Mammary epithelial cell (primary cell): ENCODE measurements at regions of chr4 and their contacts with region 1.

Region 1: GRCh38 chr4:1130316-1131186 is 17.2 kb upstream of the RNF212 start:
- DNase-seq: peak; percentile 60
- H3K4me3 ChIP-seq: no peak overlapping the region
- H3K27ac ChIP-seq: no peak overlapping the region
- H3K4me1 ChIP-seq: no peaks in the 10 kb centered on the region
- H3K27me3 ChIP-seq: no peaks in the 10 kb centered on the region
- CTCF ChIP-seq: peak; percentile 99 to 100

Region 2: GRCh38 chr4:1260418-1261106 is 130.0 kb after region 1 on chr4:
- CTCF ChIA-PET with region 1: no interaction called
- dilution Hi-C with region 1: no loop called
- in situ Hi-C with region 1: loop called in 1 of 2 experiments (anchors 10 kb)
- intact Hi-C with region 1: no loop called
- DNase-seq: no peak
- H3K4me3 ChIP-seq: no peak overlapping the region
- H3K27ac ChIP-seq: no peak overlapping the region
- H3K4me1 ChIP-seq: no peaks in the 10 kb centered on the region
- H3K27me3 ChIP-seq: no peaks in the 10 kb centered on the region
- CTCF ChIP-seq: no peak

Region 3: DNA sequence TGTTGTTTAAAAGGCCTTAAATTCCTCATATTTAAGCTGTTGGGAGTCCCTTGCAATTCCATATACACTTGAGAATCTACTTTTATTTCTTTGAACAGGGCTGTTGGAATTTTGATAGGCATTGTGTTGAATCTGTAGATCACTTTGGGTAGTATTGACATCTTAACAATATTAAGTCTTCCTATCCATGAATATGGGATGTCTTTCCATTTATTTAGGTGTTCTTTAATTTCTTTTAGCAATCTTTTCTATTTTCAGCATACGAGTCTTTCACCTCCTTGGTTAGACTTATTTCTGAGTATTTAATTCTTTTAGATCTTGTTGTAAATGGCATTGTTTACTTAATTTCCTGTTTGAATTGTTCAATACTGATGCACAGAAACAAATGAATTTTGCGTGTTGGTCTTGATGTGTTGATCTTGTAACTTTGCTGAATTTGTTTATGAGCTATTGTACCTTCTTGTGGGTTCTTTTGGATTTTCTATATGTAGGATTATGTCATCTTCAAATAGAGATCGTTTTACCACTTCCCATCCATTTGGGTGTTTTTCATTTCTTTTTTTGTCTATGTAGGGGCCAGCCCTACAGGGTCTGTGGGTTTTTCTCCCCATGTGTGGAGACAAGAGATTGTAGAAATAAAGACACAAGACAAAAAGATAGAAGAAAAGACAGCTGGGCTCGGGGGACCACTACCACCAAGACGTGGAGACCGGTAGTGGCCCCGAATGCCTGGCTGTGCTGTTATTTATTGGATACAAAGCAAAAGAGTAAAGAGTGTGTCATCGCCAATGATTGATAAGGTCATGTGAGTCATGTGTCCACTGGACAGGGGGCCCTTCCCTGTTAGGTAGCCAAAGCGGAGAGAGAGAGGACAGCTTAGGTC is 136.6 kb after region 1 on chr4:
- CTCF ChIA-PET with region 1: no interaction called
- dilution Hi-C with region 1: no loop called
- in situ Hi-C with region 1: loop called in 1 of 2 experiments (anchors 10 kb)
- intact Hi-C with region 1: loop called (anchors 1 kb)
- DNase-seq: no peak
- H3K4me3 ChIP-seq: no peak overlapping the region
- H3K27ac ChIP-seq: no peak overlapping the region
- H3K4me1 ChIP-seq: no peaks in the 10 kb centered on the region
- H3K27me3 ChIP-seq: no peaks in the 10 kb centered on the region
- CTCF ChIP-seq: no peak

Region 4: DNA sequence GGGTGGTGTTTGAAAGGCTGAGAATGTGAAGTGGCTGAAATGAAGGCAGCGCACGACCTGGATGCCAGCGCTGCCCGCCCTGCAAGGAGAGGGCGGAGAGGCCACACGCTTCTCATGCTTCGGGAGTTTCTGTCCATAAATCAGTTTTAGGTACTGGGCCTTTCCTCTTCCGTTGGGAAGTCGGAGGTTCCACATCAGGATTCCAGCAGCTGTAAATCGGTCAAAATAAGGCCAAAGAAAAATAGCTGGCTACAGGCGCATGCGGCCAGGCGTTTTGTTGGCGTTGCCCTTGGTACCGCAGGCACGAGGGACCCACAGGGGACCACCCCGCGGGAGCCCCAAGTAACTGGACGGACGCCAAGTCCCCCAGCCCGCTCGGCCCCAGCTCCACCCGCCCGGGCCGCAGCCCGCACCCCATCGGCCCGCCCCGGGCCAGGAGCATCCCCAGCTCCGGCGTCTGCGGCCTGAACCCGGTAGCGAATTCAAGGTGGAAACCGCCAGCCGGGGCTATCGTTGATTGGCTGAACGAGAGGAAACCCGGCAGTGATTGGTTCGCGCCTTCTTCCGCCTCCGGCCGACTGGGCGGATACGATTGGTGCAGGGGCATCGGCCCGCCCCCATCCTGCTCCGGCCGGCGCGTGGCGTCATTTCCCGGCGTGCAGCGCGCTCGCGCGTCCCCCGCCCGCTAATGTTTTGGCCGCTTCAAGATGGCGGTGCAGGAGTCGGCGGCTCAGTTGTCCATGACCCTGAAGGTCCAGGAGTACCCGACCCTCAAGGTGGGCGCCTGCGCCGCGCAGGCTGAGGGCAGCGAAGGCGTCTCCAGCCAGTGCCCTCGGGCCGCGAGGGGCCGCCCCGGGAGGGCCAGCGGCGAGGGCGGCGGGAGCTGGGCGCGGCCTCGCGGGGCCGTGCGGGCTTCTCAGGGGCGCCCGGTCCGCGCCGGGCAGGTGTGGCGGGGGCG is 158.9 kb after region 1 on chr4 and contains the start of gene MAEA:
- CTCF ChIA-PET with region 1: no interaction called
- dilution Hi-C with region 1: no loop called
- in situ Hi-C with region 1: no loop called
- intact Hi-C with region 1: loop called (anchors 1 kb)
- DNase-seq: peak; percentile 96
- H3K4me3 ChIP-seq: peak within 1 kb of the TSS; percentile 77 to 94 (median 79)
- H3K27ac ChIP-seq: peak within 1 kb of the TSS; percentile 80
- H3K4me1 ChIP-seq: peaks cover 26% of the 10 kb centered on the region
- H3K27me3 ChIP-seq: no peaks in the 10 kb centered on the region
- CTCF ChIP-seq: no peak
- total RNA-seq, gene MAEA: 80.4 to 109 TPM

Region 5: DNA sequence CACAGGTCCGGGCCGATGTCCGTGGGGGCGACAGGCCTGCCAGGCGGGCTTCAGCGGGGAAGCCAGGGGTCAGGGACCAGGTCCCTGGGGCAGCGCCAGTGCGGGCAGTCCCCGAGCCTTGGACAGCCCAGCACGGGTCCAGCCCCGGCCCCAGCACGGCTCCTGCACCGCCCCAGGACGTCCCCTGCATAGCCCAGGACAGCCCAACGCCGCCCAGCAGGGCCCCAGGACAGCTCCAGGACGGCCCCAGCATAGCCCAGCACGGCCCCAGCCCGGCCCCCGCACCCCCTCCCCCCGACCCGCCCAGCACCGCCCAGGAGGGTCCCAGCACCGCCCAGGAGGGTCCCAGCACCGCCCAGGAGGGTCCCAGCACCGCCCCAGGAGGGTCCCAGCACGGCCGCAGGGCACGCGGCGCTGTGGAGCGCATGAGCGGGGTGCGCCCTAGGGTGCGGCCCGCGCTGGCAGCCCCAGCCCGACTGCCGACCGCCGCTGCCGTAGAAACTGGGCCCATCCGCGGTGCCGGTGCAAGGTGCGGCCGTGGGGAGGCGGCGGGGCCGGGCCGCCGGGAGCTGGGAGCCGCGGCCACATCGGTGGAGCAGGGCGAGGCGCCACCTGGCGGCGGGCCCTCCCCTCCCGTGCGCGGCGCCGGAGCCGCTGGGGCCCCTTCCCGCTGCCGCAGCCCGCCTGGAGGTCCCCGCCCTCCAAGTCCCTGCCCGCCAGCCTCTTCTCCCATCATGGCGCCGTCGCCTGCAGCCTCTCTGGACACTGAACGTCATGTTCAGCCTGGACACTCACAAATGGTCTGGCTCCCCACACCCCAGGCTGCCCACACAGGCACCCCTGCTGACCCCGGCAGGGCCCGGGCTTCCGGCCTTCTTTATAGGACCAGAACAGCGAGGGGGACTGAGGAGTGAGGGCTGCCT is 382.4 kb after region 1 on chr4:
- CTCF ChIA-PET with region 1: no interaction called
- dilution Hi-C with region 1: no loop called
- in situ Hi-C with region 1: no loop called
- intact Hi-C with region 1: loop called (anchors 1 kb)
- DNase-seq: no peak
- H3K4me3 ChIP-seq: no peak overlapping the region
- H3K27ac ChIP-seq: no peak overlapping the region
- H3K4me1 ChIP-seq: no peaks in the 10 kb centered on the region
- H3K27me3 ChIP-seq: no peaks in the 10 kb centered on the region
- CTCF ChIP-seq: peak; percentile 35 to 45

Region 6: GRCh38 chr4:1628892-1629698 is 498.5 kb after region 1 on chr4:
- CTCF ChIA-PET with region 1: no interaction called
- dilution Hi-C with region 1: loop called (anchors 10 kb)
- in situ Hi-C with region 1: no loop called
- intact Hi-C with region 1: loop called (anchors 1 kb)
- DNase-seq: peak; percentile 17
- H3K4me3 ChIP-seq: no peak overlapping the region
- H3K27ac ChIP-seq: no peak overlapping the region
- H3K4me1 ChIP-seq: no peaks in the 10 kb centered on the region
- H3K27me3 ChIP-seq: no peaks in the 10 kb centered on the region
- CTCF ChIP-seq: peak; percentile 89 to 97